HepG2 (cell line): ENCODE measurements at regions of chr2 and their contacts with region 1.

Region 1: GRCh38 chr2:7097348-7097895 is 180.2 kb downstream of the RNF144A start:
- DNase-seq: peak; percentile 41
- ATAC-seq: peak; percentile 96
- H3K4me3 ChIP-seq: peak overlapping the region in 1 of 3 experiments; percentile 25; a peak in 2 of 6 replicates
- H3K27ac ChIP-seq: no peak overlapping the region
- H3K4me1 ChIP-seq: peaks cover 5% of the 10 kb centered on the region
- H3K27me3 ChIP-seq: no peaks in the 10 kb centered on the region
- CTCF ChIP-seq: peak; percentile 98
- EP300 ChIP-seq: no peak
- POLR2A ChIP-seq: no peak
- RAD21 ChIP-seq: peak; percentile 90

Region 2: DNA sequence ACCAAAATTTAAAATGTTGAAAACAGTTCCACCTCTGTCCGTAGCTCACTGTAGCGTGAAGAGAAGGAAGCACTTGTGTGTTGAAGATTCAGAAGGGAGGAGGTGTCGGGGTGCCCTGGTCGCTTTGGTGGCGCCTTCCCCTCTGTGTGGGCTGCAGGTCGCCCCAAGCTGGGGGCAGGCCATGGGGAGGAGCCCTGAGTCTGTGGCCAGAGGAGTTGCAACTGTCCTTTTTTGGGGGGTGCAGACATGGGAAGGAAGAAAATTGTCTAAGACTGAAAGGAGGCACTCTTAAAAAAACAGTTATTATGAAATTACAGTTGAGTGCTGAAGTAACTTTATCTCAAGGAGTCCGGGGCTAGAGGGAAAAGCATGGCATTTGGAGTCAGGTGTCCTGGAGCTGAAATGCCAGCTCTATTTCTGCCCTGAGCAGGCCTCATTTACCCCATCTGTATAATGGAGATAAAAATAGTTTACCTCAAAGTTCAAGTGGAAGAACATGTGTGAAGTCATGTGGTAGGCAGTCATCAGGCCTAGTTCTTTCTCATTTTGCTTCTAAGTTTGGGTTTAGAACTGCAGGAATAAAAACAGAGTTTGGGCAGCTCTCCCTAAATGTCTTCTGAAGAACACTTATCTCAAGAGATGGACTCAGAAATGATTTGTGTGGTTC is 98.1 kb before region 1 on chr2:
- CTCF ChIA-PET with region 1: no interaction called
- POLR2A ChIA-PET with region 1: no interaction called
- in situ Hi-C with region 1: no loop called
- intact Hi-C with region 1: no loop called
- DNase-seq: no peak
- ATAC-seq: no peak
- H3K4me3 ChIP-seq: no peak overlapping the region
- H3K27ac ChIP-seq: no peak overlapping the region
- H3K4me1 ChIP-seq: peaks cover 6% of the 10 kb centered on the region; the same call in 1 of the 2 replicates
- H3K27me3 ChIP-seq: no peaks in the 10 kb centered on the region
- CTCF ChIP-seq: no peak
- EP300 ChIP-seq: no peak
- POLR2A ChIP-seq: no peak
- RAD21 ChIP-seq: no peak

Region 3: DNA sequence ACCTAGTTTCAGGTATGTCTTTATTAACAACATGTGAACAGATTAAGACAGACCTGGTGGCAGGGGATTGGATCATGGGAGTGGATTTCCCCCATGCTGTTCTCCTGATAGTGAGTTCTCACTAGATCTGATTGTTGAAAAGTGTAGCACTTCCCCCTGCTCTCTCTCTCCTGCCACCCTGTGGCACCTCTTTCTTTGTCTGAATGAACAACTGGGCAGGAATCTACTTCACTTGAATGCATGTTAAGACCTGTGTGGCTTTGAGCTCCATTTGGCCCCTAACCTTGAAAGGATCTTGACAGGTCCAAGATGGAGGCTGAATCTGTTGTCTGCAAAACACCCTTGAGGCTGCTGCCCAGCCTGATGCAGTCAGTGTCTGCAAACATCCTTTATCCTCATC is 14.2 kb after region 1 on chr2:
- CTCF ChIA-PET with region 1: no interaction called
- POLR2A ChIA-PET with region 1: no interaction called
- in situ Hi-C with region 1: no loop called
- intact Hi-C with region 1: loop called (anchors 1 kb)
- DNase-seq: no peak
- ATAC-seq: peak; percentile 67
- H3K4me3 ChIP-seq: no peak overlapping the region
- H3K27ac ChIP-seq: no peak overlapping the region
- H3K4me1 ChIP-seq: no peaks in the 10 kb centered on the region
- H3K27me3 ChIP-seq: no peaks in the 10 kb centered on the region
- CTCF ChIP-seq: 0 out of 2 replicates have a peak, but pooled peaks have one; percentile 12
- EP300 ChIP-seq: no peak
- POLR2A ChIP-seq: no peak
- RAD21 ChIP-seq: no peak

Region 4: GRCh38 chr2:7133521-7133920 is 36.1 kb after region 1 on chr2:
- CTCF ChIA-PET with region 1: interaction called, 7 read pairs
- POLR2A ChIA-PET with region 1: no interaction called
- in situ Hi-C with region 1: no loop called
- intact Hi-C with region 1: loop called (anchors 1 kb)
- DNase-seq: peak; percentile 16
- ATAC-seq: peak; percentile 100
- H3K4me3 ChIP-seq: no peak overlapping the region
- H3K27ac ChIP-seq: no peak overlapping the region
- H3K4me1 ChIP-seq: no peaks in the 10 kb centered on the region
- H3K27me3 ChIP-seq: no peaks in the 10 kb centered on the region
- CTCF ChIP-seq: peak; percentile 53
- EP300 ChIP-seq: no peak
- POLR2A ChIP-seq: no peak
- RAD21 ChIP-seq: no peak; the same call in 1 of the 2 replicates

Region 5: GRCh38 chr2:7377916-7378569 is 280.6 kb after region 1 on chr2:
- CTCF ChIA-PET with region 1: no interaction called
- POLR2A ChIA-PET with region 1: no interaction called
- in situ Hi-C with region 1: no loop called
- intact Hi-C with region 1: loop called (anchors 2 kb)
- DNase-seq: no peak
- ATAC-seq: peak; percentile 85
- H3K4me3 ChIP-seq: no peak overlapping the region
- H3K27ac ChIP-seq: no peak overlapping the region
- H3K4me1 ChIP-seq: no peaks in the 10 kb centered on the region
- H3K27me3 ChIP-seq: peaks cover 0 to 3% of the 10 kb centered on the region in 2 experiments; a peak in 1 of 5 replicates
- CTCF ChIP-seq: no peak
- EP300 ChIP-seq: no peak
- POLR2A ChIP-seq: no peak
- RAD21 ChIP-seq: no peak

Region 6: DNA sequence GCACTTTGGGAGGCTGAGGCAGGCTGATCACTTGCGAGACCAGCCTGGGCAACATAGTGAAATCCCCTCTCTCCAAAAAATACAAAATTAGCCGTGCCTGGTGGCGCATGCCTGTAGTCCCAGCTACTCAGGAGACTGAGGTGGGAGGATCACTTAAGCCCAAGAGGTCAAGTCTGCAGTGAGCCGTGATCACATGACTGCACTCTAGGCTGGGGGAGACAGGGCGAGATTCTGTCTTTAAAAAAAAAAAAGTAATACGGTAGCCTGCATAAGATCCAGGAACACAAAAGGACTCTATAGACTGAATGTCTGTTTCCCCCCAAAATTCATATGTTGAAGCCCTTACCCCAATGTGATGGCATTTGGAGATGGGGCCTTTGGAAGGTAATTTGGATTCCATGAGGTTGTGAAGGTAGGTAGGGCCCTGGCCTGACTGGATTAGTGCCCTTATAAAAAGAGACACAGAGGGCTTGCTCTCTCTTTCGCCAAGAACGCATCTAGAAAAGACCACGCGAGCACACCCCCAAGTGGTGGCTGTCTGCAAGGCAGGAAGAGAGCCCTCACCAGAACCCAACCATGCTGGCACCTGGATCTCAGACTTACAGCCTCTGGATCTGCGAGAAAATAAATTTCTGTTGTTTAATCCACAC is 1889.0 kb after region 1 on chr2:
- CTCF ChIA-PET with region 1: no interaction called
- POLR2A ChIA-PET with region 1: no interaction called
- in situ Hi-C with region 1: no loop called
- intact Hi-C with region 1: loop called (anchors 5 kb)
- DNase-seq: peak; percentile 36
- ATAC-seq: peak; percentile 99
- H3K4me3 ChIP-seq: no peak overlapping the region
- H3K27ac ChIP-seq: no peak overlapping the region
- H3K4me1 ChIP-seq: no peaks in the 10 kb centered on the region
- H3K27me3 ChIP-seq: no peaks in the 10 kb centered on the region
- CTCF ChIP-seq: peak; percentile 79
- EP300 ChIP-seq: no peak
- POLR2A ChIP-seq: no peak
- RAD21 ChIP-seq: peak; percentile 63